Activated CD4-positive, alpha-beta T cell treated with anti-CD3 and anti-CD28 coated beads for 36 hours (primary cell): ENCODE measurements at regions of chr13 and their contacts with region 1.

Region 1: GRCh38 chr13:75038393-75039113 is 443.4 kb downstream of the TBC1D4 start:
- DNase-seq: no peak
- ATAC-seq: no peak
- H3K4me3 Mint-ChIP-seq: no peak overlapping the region
- H3K27ac Mint-ChIP-seq: no peak overlapping the region
- H3K4me1 Mint-ChIP-seq: no peaks in the 10 kb centered on the region
- H3K27me3 Mint-ChIP-seq: peaks cover 8% of the 10 kb centered on the region

Region 2: GRCh38 chr13:74560325-74560724 is 478.2 kb before region 1 on chr13:
- CTCF ChIA-PET with region 1: no interaction called
- POLR2A ChIA-PET with region 1: no interaction called
- intact Hi-C with region 1: no loop called
- DNase-seq: no peak
- ATAC-seq: no peak
- H3K4me3 Mint-ChIP-seq: no peak overlapping the region
- H3K27ac Mint-ChIP-seq: no peak overlapping the region
- H3K4me1 Mint-ChIP-seq: no peaks in the 10 kb centered on the region
- H3K27me3 Mint-ChIP-seq: no peaks in the 10 kb centered on the region

Region 3: DNA sequence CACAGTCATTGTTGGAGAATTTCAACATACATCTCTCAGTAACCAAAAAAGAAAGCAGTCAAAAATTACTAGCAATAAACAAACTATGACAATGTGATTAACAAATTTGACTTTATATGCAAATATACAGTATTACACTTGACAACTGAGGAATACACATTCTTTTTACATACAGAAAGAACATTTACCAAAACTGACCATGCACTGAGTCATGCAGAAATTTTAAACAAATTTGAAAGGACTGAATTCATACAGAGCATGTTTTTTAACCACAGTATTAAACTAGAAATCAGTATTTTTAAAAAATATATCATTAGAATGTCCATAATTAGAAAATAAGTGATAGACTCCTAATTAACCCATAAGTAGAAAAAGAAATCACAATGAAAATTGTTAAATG is 23.4 kb after region 1 on chr13:
- CTCF ChIA-PET with region 1: no interaction called
- POLR2A ChIA-PET with region 1: no interaction called
- intact Hi-C with region 1: loop called in 1 of 2 experiments (anchors 2 kb)
- DNase-seq: no peak
- ATAC-seq: no peak
- H3K4me3 Mint-ChIP-seq: no peak overlapping the region
- H3K27ac Mint-ChIP-seq: no peak overlapping the region
- H3K4me1 Mint-ChIP-seq: no peaks in the 10 kb centered on the region
- H3K27me3 Mint-ChIP-seq: no peaks in the 10 kb centered on the region

Region 4: GRCh38 chr13:75115171-75115570 is 76.6 kb after region 1 on chr13:
- CTCF ChIA-PET with region 1: no interaction called
- POLR2A ChIA-PET with region 1: no interaction called
- intact Hi-C with region 1: no loop called
- DNase-seq: no peak
- ATAC-seq: no peak
- H3K4me3 Mint-ChIP-seq: no peak overlapping the region
- H3K27ac Mint-ChIP-seq: no peak overlapping the region
- H3K4me1 Mint-ChIP-seq: no peaks in the 10 kb centered on the region
- H3K27me3 Mint-ChIP-seq: peaks cover 3% of the 10 kb centered on the region